ENCODE measurements at regions of chr5 and their contacts with region 1.

Region 1: DNA sequence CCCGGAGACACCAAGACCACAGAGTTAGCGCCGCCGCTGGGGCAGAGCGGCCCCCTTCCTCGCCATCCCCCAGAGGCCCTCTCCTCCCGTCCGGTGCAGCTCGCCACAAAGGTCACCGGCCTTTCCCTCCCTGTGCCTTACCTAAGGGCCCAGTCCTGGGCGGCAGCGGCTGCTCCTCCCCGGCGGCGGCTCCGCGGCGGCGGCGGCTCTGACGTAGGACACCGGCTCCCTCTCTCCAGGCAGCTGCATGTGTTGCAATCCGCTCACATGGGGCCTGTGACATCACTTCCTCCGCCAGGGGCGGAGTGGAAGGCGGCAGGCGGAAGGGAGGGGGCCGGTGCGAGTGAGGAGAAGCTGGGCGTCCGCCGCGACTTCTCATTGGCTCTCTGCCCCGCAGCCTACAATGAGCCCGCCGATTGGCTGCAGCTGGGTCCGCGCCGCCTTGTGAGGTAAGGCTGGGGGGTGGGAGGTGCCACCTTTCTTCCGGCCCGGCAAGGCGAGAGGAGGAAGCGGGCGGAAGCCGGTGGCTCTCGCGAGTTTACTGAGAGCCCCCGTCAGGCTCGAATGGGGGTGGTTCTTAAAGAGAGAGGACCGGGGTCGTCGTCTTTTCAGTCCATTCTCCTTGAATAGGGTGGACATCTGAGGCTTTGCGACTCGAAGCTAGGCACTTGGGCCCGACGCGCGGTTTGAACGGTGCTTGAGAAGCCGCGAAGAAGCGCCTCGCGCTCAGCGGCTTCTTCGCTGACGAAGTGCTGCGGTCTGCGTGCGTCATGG is at the start of gene ETF1:
- DNase-seq: peak; percentile 100
- total RNA-seq, gene ETF1: 86.8 TPM

Region 2: DNA sequence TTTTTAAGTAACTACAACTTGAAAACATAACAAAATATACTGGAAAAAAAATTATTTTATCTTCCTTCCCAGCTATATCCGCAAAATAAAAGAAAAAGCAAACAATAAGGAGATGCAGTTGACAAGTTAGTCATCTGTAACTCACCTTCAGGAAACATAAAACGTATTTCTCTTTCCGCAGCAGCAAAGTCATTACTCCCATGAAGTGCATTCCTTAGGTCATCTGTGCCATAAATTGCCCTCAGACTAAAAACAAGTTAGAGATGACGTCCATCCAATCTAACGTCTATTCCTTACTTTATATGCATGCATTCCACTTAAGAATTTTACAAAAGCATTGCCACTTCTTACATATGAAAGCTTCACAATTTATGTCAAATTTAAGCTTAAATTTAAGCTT is 414.8 kb before region 1 on chr5:
- intact Hi-C with region 1: no loop called
- DNase-seq: no peak

Region 3: DNA sequence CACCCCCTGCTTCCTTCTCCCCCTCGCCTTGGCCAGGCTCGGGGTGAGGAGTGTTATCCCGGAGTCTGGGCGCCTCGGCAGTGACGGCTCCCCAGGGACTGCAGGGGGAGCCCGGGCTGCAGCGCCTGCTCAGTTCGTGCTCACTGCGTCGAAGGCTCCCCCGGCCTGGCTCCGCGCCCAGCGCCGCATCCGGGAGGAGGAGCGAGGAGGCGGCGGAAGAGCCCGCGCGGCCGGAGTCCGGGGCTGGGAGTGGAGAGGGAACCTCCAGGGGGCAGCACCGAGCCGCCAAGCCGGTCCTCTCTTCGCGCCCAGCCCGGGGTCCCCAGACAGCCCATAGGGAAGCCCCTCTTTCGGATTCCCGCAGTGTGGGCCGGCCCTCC is 79.1 kb before region 1 on chr5:
- intact Hi-C with region 1: loop called (anchors 1 kb)
- DNase-seq: peak; percentile 98

Region 4: GRCh38 chr5:138503487-138504270 is 39.5 kb before region 1 on chr5:
- intact Hi-C with region 1: no loop called
- DNase-seq: no peak

Region 5: GRCh38 chr5:138610918-138611677 is 68.0 kb after region 1 on chr5:
- intact Hi-C with region 1: no loop called
- DNase-seq: no peak

Region 6: DNA sequence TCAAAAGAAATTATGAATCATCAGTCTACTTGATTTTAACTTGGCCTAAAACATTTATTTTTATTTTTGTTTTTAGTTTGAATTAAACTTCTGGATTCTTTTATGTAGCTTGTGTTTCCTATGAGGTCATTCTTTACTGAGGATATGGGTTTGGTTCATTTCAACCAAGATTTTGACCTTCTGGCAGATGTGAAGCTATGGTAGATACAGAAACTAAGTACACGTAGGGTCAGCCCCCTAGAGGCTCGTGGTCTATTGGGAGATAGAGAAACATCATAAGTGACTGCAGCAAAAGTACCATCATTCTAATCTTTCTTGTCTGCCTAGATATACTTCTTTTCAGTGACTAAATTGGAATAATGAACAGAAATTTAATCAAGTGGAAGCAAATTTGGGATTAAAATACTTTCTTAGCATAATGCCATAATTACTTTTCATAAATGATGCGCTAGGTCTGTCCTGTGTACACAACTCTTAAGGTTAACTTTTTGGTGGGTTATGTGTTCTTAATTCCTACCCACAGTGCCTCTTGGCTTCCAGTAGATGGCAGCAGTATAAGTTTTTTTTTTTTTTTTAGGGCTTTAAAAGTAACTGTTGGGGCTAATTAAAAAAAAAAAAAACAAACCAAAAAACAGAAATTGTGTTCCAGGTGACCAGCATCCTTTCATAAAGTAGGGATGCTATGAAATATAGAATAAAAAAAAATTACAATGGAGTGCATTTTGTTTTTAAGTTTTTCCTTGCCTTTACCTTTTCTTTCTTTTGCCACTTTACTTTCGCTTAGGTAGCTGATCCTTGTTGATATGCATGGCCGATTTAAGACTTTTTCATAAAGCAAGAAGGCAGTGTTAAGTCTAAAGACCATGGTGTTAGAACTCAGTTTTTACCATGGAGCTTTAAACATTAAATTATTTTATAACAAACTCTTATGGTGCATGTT is 282.1 kb after region 1 on chr5:
- intact Hi-C with region 1: no loop called
- DNase-seq: no peak